ENCODE measurements at regions of chr16 and their contacts with region 1.

Region 1: GRCh38 chr16:79593074-79593531 is 7.4 kb downstream of the MAF start:
- DNase-seq: peak in 1 of 2 donors; percentile 22
- ATAC-seq: peak; percentile 64 to 76 (median 70)
- H3K4me3 ChIP-seq: peak overlapping the region; percentile 84
- H3K27ac ChIP-seq: peak overlapping the region; percentile 95
- H3K4me1 ChIP-seq: peaks cover 23% of the 10 kb centered on the region
- H3K27me3 ChIP-seq: no peaks in the 10 kb centered on the region
- CTCF ChIP-seq: no peak

Region 2: DNA sequence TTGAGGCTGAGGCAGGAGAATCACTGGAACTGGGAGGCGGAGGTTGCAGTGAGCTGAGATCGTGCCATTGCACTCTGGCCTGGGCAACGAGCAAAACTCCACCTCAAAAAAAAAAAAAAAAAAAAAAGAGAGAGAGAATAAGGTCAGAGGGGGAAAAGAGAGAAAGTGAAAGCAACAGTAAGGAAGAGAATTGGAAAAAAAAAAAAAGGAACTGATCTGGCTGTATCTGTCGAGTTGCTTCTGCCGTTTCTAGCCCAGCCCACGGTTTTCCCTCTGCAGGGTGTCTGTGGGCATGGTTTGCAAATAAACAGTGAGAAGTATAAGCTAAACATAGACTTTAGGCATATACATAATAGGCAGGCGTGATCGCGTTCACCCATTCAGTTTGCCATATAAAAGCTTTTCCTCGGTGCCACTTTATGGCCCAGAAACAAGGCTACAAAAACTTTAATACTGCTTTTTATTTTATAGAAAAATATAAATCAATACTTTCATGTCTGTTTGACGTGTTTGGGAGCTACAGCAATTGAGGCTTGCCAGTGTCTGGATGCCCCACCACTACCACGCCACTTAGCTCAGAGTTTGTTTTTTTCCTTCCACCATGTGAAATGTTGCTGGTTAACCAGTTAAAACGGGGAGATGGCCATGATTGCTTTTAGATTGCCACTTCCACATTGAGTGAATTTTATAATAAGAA is 429.3 kb before region 1 on chr16:
- intact Hi-C with region 1: no loop called
- DNase-seq: no peak
- ATAC-seq: no peak
- H3K4me3 ChIP-seq: no peak overlapping the region
- H3K27ac ChIP-seq: no peak overlapping the region
- H3K4me1 ChIP-seq: no peaks in the 10 kb centered on the region
- H3K27me3 ChIP-seq: no peaks in the 10 kb centered on the region
- CTCF ChIP-seq: no peak

Region 3: GRCh38 chr16:79362300-79362970 is 230.7 kb before region 1 on chr16:
- intact Hi-C with region 1: loop called (anchors 5 kb)
- DNase-seq: no peak
- ATAC-seq: peak; percentile 75 to 88 (median 78)
- H3K4me3 ChIP-seq: peak overlapping the region; percentile 33
- H3K27ac ChIP-seq: peak overlapping the region; percentile 82
- H3K4me1 ChIP-seq: peaks cover 5% of the 10 kb centered on the region
- H3K27me3 ChIP-seq: no peaks in the 10 kb centered on the region
- CTCF ChIP-seq: no peak

Region 4: GRCh38 chr16:79437764-79438751 is 155.0 kb before region 1 on chr16:
- intact Hi-C with region 1: loop called in 1 of 2 experiments (anchors 10 kb)
- DNase-seq: peak; percentile 59 to 76
- ATAC-seq: peak; percentile 85 to 94 (median 89)
- H3K4me3 ChIP-seq: peak overlapping the region; percentile 44
- H3K27ac ChIP-seq: peak overlapping the region; percentile 79
- H3K4me1 ChIP-seq: peaks cover 23% of the 10 kb centered on the region
- H3K27me3 ChIP-seq: no peaks in the 10 kb centered on the region
- CTCF ChIP-seq: no peak

Region 5: GRCh38 chr16:79469999-79470398 is 123.1 kb before region 1 on chr16:
- intact Hi-C with region 1: loop called (anchors 2 to 5 kb)
- DNase-seq: no peak
- ATAC-seq: no peak
- H3K4me3 ChIP-seq: no peak overlapping the region
- H3K27ac ChIP-seq: no peak overlapping the region
- H3K4me1 ChIP-seq: peaks cover 15% of the 10 kb centered on the region
- H3K27me3 ChIP-seq: no peaks in the 10 kb centered on the region
- CTCF ChIP-seq: no peak

Region 6: GRCh38 chr16:79542237-79542774 is 50.8 kb before region 1 on chr16:
- intact Hi-C with region 1: loop called (anchors 2 to 5 kb)
- DNase-seq: peak; percentile 58 to 83
- ATAC-seq: peak; percentile 83 to 93 (median 88)
- H3K4me3 ChIP-seq: peak overlapping the region; percentile 37
- H3K27ac ChIP-seq: peak overlapping the region; percentile 78
- H3K4me1 ChIP-seq: peaks cover 25% of the 10 kb centered on the region
- H3K27me3 ChIP-seq: no peaks in the 10 kb centered on the region
- CTCF ChIP-seq: no peak